T-cell (primary cell): ENCODE measurements at regions of chr7 and their contacts with region 1.

Region 1: GRCh38 chr7:76359111-76359978 is 554 bp upstream of the YWHAG start:
- DNase-seq: peak; percentile 83 to 97 (median 91)
- ATAC-seq: peak; percentile 92 to 93 (median 92)
- H3K4me3 ChIP-seq: peak overlapping the region; percentile 70 to 99
- H3K4me3 Mint-ChIP-seq: peak overlapping the region; percentile 83 to 95 (median 84)
- H3K27ac ChIP-seq: peak overlapping the region; percentile 92
- H3K27ac Mint-ChIP-seq: peak overlapping the region; percentile 91 to 96
- H3K4me1 ChIP-seq: peaks cover 20 to 21% of the 10 kb centered on the region in 2 experiments
- H3K4me1 Mint-ChIP-seq: peaks cover 41 to 44% (median 43%) of the 10 kb centered on the region in 3 donors
- H3K27me3 ChIP-seq: no peaks in the 10 kb centered on the region
- H3K27me3 Mint-ChIP-seq: no peaks in the 10 kb centered on the region

Region 2: DNA sequence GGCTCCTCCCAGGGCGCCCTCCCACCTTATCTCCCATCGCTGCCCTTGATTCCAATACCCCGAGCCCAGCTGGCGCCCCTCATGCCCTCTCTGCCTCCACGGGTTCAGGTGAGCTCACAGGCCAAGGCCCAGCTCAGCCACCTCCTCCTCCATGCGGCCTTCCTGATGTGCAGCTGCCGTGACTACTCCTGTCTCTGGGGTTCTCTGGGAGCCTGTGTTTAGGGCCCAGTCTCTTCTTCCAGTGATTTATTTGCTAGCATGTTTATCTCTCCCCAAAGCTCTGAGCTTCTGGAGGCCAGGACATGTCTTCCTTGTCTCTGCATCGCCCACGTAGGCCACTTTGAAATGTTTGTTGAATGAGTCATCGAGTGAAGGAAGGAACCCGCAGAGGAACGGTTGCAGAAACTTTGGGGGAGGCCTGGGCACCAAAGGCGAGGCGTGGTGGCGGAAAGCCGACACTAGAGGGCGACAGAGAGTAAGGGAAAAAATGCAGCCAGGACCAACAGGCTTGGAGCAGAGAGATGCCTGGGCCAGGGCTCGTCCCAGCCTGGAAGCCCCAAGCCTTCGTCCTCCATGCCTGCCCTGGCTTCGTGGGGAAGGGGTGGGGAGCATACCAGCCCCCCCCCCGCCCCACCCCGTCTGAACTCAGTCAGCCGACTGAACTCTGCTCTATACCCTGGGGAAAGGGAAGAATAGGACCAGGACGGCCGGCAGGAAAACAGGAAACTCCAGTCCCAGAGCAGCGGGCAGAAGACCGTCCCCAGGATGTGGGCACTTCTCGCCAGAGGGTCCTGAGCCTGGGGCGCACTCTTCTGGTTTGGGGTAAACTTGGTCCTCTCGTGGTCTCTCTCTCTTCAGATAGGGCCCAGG is 67.8 kb before region 1 on chr7:
- CTCF ChIA-PET with region 1: interaction called, 5 to 14 read pairs
- POLR2A ChIA-PET with region 1: interaction called in 1 of 2 experiments, 6 read pairs
- DNase-seq: peak; percentile 42 to 91 (median 71)
- ATAC-seq: peak; percentile 90 to 95 (median 92)
- H3K4me3 ChIP-seq: no peak overlapping the region
- H3K4me3 Mint-ChIP-seq: no peak overlapping the region
- H3K27ac ChIP-seq: no peak overlapping the region
- H3K27ac Mint-ChIP-seq: peak overlapping the region; percentile 46 to 58
- H3K4me1 ChIP-seq: peaks cover 0 to 11% of the 10 kb centered on the region in 2 experiments
- H3K4me1 Mint-ChIP-seq: peaks cover 5 to 9% (median 6%) of the 10 kb centered on the region in 3 donors
- H3K27me3 ChIP-seq: peaks cover 0 to 14% of the 10 kb centered on the region in 2 experiments
- H3K27me3 Mint-ChIP-seq: no peaks in the 10 kb centered on the region